ENCODE measurements at regions of chr1 and their contacts with region 1.

Region 1: DNA sequence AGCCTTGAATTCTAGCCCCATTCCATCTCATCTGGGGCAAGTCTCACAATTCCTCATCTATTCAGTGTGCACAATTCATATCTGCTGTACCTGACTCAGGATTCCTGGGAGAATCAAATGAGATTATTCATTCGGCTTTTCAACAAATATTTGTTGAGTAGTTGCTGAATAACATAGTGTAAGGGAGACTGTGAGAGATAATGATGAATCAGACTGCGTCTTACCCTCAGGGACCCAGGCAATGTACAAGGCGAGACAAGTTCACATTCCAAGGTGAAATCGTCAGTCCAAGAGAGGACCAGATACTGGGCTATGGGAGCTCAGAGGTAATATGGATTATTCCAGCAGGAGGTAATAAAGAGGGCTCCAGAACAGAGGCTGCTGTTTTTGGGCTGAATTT is 67.8 kb upstream of the SMYD2 start:
- DNase-seq: no peak
- ATAC-seq: no peak
- H3K4me3 ChIP-seq: no peak overlapping the region
- H3K4me3 Mint-ChIP-seq: no peak overlapping the region
- H3K27ac ChIP-seq: no peak overlapping the region
- H3K27ac Mint-ChIP-seq: no peak overlapping the region
- H3K4me1 ChIP-seq: no peaks in the 10 kb centered on the region
- H3K4me1 Mint-ChIP-seq: peaks cover 0 to 5% of the 10 kb centered on the region in 2 donors
- H3K27me3 ChIP-seq: peaks cover 5% of the 10 kb centered on the region
- H3K27me3 Mint-ChIP-seq: peaks cover 19 to 22% of the 10 kb centered on the region in 2 donors
- CTCF ChIP-seq: no peak

Region 2: GRCh38 chr1:214637722-214638458 is 424.8 kb after region 1 on chr1:
- intact Hi-C with region 1: loop called (anchors 2 kb)
- DNase-seq: peak in 1 of 2 donors; percentile 70
- ATAC-seq: peak in 2 of 3 donors; percentile 44 to 56
- H3K4me3 ChIP-seq: no peak overlapping the region
- H3K4me3 Mint-ChIP-seq: no peak overlapping the region
- H3K27ac ChIP-seq: no peak overlapping the region
- H3K27ac Mint-ChIP-seq: no peak overlapping the region
- H3K4me1 ChIP-seq: no peaks in the 10 kb centered on the region
- H3K4me1 Mint-ChIP-seq: no peaks in the 10 kb centered on the region
- H3K27me3 ChIP-seq: no peaks in the 10 kb centered on the region
- H3K27me3 Mint-ChIP-seq: no peaks in the 10 kb centered on the region
- CTCF ChIP-seq: peak; percentile 69

Region 3: GRCh38 chr1:215526553-215527151 is 1313.5 kb after region 1 on chr1:
- intact Hi-C with region 1: loop called (anchors 5 kb)
- DNase-seq: peak in 1 of 2 donors; percentile 67
- ATAC-seq: no peak
- H3K4me3 ChIP-seq: no peak overlapping the region
- H3K4me3 Mint-ChIP-seq: no peak overlapping the region
- H3K27ac ChIP-seq: no peak overlapping the region
- H3K27ac Mint-ChIP-seq: no peak overlapping the region
- H3K4me1 ChIP-seq: no peaks in the 10 kb centered on the region
- H3K4me1 Mint-ChIP-seq: no peaks in the 10 kb centered on the region
- H3K27me3 ChIP-seq: no peaks in the 10 kb centered on the region
- H3K27me3 Mint-ChIP-seq: no peaks in the 10 kb centered on the region
- CTCF ChIP-seq: peak; percentile 45

Measured in natural killer cell (primary cell).